ENCODE measurements at regions of chr9 and their contacts with region 1.

Region 1: DNA sequence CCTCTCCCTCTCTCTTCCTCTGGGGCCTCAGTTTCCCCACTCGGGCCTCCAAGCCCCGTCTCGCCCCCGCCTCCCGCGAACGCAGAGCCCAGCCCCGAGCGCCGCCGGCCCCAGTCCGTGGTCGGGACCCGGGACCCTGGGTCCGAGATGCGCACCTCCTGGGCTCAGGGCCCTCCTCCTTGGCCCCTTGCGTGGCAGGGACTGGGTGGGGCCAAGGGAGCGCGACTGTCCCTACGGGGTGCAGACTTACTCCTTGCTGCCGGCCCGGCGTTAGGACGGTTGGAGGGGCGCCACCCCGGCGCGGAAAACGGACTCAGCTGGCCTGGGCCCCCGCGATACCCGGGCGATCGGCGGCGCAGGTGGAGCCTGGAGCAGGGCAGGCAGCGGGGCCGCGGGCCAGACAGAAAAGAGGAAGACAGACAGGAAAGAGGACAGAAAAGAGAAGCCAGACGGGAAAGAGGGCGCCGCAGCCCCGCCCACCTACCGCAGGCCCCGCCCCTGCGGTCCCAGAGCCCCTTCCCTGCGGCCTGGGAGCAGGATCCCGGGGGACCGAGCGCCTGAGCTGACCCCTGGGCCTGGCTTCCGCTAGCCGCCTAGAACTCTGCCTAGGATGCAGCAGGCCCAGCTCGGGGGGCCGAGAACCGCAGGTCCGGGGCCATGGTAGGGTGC is at the start of gene GBGT1:
- DNase-seq: peak; percentile 59 to 78 (median 73)
- H3K4me3 ChIP-seq: peak within 1 kb of the TSS; percentile 70 to 96 (median 87)
- H3K4me3 Mint-ChIP-seq: peak within 1 kb of the TSS; percentile 81 to 89
- H3K27ac ChIP-seq: peak within 1 kb of the TSS in 1 of 2 donors; percentile 89
- H3K27ac Mint-ChIP-seq: peak within 1 kb of the TSS in 5 of 7 donors; percentile 53 to 86 (median 74)
- H3K4me1 ChIP-seq: peaks cover 32 to 38% of the 10 kb centered on the region in 2 donors
- H3K4me1 Mint-ChIP-seq: peaks cover 30% of the 10 kb centered on the region
- H3K27me3 ChIP-seq: peaks cover 0 to 6% of the 10 kb centered on the region in 2 donors
- H3K27me3 Mint-ChIP-seq: peaks cover 4 to 26% (median 13%) of the 10 kb centered on the region in 3 donors
- CTCF ChIP-seq: no peak
- polyA plus RNA-seq, gene GBGT1: 7.1 to 40.1 (median 8.0) TPM

Region 2: DNA sequence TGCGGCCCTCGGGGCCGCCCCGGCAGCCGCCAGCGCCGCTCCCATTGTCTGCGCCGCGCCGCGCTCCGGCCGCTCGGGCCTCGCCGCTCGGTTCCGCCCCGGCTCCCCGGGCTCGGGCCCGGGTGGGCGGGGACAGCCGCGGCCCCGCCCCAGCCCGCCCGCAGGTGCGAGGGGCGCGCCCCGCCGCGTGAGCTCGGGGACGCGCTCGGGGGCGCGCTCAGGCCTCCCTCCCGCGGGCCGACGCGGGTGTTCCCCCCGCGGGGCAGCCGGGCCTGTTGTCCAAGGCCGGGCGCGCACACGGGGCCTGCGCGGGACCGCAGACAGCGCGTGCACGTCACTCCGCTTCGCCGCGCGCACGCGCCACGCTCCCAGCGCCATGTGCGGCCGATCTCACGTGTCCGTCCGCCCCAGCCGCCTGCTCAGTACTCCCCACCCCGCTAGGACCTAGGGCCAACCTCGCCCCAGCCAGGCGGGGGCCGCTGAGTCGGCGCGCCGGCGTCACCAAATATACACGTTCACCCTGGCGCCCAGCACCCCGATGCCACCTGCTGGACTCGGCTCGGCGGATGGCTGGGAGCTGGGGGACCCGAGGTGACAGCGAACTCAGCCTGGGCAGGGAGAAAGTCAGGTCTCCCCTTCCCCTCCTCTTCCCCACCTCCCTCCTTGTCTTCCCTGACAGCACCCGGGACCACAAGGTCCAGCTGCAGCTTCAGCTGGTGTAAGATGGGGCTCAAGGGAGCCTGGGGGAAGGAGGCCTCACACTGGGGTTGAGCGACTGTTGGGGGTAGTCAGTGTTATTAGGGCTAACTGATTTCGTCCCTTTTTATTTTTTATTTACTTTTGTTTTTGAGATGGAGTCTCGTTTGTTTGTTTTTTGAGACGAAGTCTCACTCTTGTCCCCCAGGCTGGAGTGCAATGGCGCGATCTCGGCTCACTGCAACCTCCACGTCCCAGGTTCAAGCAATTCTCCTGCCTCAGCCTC is 14.2 kb before region 1 on chr9:
- intact Hi-C with region 1: loop called in 1 of 2 experiments (anchors 2 kb)
- DNase-seq: peak; percentile 89 to 94 (median 90)
- H3K4me3 ChIP-seq: peak overlapping the region; percentile 18 to 58 (median 19)
- H3K4me3 Mint-ChIP-seq: peak overlapping the region; percentile 67 to 71
- H3K27ac ChIP-seq: peak overlapping the region; percentile 43 to 46
- H3K27ac Mint-ChIP-seq: peak overlapping the region in 4 of 7 donors; percentile 24 to 61 (median 36)
- H3K4me1 ChIP-seq: peaks cover 25 to 32% of the 10 kb centered on the region in 2 donors
- H3K4me1 Mint-ChIP-seq: peaks cover 31% of the 10 kb centered on the region
- H3K27me3 ChIP-seq: no peaks in the 10 kb centered on the region
- H3K27me3 Mint-ChIP-seq: peaks cover 4 to 18% (median 4%) of the 10 kb centered on the region in 3 donors
- CTCF ChIP-seq: peak; percentile 44

Measured in CD14-positive monocyte (primary cell).